Ascending aorta (tissue), 2 donors: ENCODE measurements at regions of chr6 and their contacts with region 1.

Region 1: DNA sequence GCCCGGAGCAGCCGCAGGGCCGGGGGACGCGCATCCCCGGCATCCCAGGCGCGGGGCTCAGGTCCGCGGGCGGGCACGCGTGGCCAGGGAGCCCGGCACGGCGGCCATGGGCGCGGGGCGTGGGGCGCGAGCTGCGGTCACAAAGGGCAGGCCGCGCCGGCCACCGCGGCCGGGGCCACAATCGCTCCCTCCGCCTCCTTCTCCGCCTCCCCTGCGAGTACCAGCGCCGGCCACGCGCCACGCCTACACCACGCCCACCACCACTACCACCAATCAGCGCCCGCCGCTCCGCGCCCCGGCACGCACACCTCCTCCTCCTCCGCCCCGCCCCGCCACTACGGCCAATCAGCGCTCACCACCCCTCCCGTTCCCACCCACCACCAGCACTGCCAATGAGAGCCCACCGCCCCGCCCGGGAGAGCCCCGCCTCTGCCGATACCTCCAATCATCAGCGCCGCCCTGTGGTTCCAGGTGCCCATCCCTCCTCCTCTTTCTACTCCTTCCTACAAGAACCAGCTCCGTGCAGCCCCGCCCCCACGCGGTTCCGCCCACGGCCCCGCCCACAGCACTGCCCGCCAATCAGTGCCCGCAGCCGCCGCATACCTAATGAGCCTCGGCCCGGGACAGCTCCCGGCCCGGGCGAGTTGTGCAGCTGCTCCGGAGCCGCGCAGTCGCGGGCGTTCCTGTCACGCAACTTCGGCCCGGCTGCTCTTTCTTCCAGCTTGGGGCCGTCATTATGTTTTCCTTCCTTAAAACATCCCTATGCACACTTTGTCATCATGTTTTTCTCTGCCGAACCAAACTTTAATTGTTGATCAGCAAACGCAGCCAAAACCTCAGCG is at the start of gene RPS6KA2:
- DNase-seq: peak; percentile 100
- H3K4me3 ChIP-seq: peak within 1 kb of the TSS; percentile 91 to 92
- H3K27ac ChIP-seq: peak within 1 kb of the TSS; percentile 80 to 90
- H3K4me1 ChIP-seq: peaks cover 0 to 2% of the 10 kb centered on the region in 2 donors
- H3K27me3 ChIP-seq: no peaks in the 10 kb centered on the region
- CTCF ChIP-seq: no peak
- total RNA-seq, gene RPS6KA2: 196 TPM

Region 2: GRCh38 chr6:166382933-166383801 is 244.1 kb before region 1 on chr6 and contains the start of gene MPC1:
- intact Hi-C with region 1: loop called (anchors 1 kb)
- DNase-seq: peak; percentile 89 to 98
- H3K4me3 ChIP-seq: peak within 1 kb of the TSS; percentile 74 to 94
- H3K27ac ChIP-seq: peak within 1 kb of the TSS; percentile 95
- H3K4me1 ChIP-seq: peaks cover 0 to 18% of the 10 kb centered on the region in 2 donors
- H3K27me3 ChIP-seq: no peaks in the 10 kb centered on the region
- CTCF ChIP-seq: no peak
- total RNA-seq, gene MPC1: 23.8 TPM

Region 3: DNA sequence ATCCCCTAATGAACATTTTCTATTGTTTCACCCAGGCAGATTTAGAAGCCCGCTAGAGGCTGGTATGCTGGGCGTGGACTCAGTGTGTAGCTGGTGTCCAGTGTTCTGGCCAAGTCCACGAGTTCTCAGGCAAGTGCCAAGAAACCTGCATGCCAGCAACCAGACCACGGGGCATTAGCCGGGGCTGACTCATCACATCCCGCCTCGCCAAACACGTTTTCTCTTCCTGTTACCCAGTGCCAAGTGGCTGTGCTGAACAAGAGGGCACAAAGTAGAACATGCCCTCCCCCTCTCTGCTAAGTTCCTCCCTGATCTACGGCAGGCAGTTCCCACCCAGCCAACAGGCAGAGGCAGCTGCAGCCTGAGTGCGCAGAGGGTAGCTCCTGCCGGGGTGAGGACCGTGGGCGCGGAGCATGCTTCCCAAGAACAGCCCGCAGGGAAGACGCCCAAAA is 70.4 kb before region 1 on chr6:
- intact Hi-C with region 1: loop called (anchors 1 kb)
- DNase-seq: peak; percentile 96 to 97
- H3K4me3 ChIP-seq: peak overlapping the region in 1 of 2 donors; percentile 44
- H3K27ac ChIP-seq: peak overlapping the region; percentile 77 to 80
- H3K4me1 ChIP-seq: peaks cover 11 to 13% of the 10 kb centered on the region in 2 donors
- H3K27me3 ChIP-seq: no peaks in the 10 kb centered on the region
- CTCF ChIP-seq: no peak

Region 4: GRCh38 chr6:166598441-166599138 is 28.7 kb before region 1 on chr6:
- intact Hi-C with region 1: loop called (anchors 2 kb)
- DNase-seq: peak in 1 of 2 donors; percentile 83
- H3K4me3 ChIP-seq: no peak overlapping the region
- H3K27ac ChIP-seq: peak overlapping the region; percentile 45 to 83
- H3K4me1 ChIP-seq: peaks cover 0 to 10% of the 10 kb centered on the region in 2 donors
- H3K27me3 ChIP-seq: no peaks in the 10 kb centered on the region
- CTCF ChIP-seq: no peak

Region 5: GRCh38 chr6:166736634-166737033 is 109.4 kb after region 1 on chr6:
- intact Hi-C with region 1: no loop called
- DNase-seq: no peak
- H3K4me3 ChIP-seq: no peak overlapping the region
- H3K27ac ChIP-seq: no peak overlapping the region
- H3K4me1 ChIP-seq: no peaks in the 10 kb centered on the region
- H3K27me3 ChIP-seq: no peaks in the 10 kb centered on the region
- CTCF ChIP-seq: no peak

Region 6: DNA sequence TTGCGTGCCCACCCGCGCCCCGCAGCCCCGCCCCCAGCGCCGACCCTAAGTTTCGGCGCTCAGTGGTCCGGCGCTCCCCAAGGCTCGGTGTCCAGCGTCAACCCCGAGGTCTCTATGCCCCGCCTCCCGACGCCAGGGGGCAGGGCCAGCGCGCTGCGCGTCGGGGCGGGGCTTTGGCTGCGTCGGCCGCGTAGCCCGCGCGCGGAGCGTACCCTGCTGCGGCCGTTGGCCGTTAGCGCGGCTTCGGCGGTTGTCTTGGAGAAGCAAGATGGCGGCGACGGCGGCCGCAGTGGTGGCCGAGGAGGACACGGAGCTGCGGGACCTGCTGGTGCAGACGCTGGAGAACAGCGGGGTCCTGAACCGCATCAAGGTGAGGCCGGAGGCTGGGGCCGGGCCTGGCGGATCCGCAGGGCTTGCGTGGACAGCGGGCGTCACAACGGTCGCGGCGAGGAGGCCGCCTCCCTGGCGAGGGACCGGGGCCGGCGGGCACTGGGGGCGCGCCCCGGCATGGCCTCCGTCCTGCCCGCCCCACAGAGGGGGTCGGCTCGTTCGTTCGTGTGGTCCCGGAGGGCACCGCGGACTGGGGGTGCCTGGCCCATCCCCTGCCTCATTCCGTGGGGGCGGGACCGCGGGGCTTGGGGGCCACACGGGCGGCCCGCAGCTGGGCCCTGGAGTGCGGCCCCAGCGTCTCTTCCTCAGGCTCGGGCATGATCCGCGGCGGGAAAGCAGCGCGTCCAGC is 372.1 kb after region 1 on chr6 and contains the start of gene CEP43:
- intact Hi-C with region 1: loop called (anchors 2 kb)
- DNase-seq: peak; percentile 77 to 96
- H3K4me3 ChIP-seq: peak within 1 kb of the TSS; percentile 72 to 96
- H3K27ac ChIP-seq: peak within 1 kb of the TSS; percentile 24 to 52
- H3K4me1 ChIP-seq: peaks cover 7 to 12% of the 10 kb centered on the region in 2 donors
- H3K27me3 ChIP-seq: no peaks in the 10 kb centered on the region
- CTCF ChIP-seq: no peak
- total RNA-seq, gene CEP43: 10.7 TPM